Motor neuron (in vitro differentiated cells): ENCODE measurements at regions of chr4 and their contacts with region 1.

Region 1: DNA sequence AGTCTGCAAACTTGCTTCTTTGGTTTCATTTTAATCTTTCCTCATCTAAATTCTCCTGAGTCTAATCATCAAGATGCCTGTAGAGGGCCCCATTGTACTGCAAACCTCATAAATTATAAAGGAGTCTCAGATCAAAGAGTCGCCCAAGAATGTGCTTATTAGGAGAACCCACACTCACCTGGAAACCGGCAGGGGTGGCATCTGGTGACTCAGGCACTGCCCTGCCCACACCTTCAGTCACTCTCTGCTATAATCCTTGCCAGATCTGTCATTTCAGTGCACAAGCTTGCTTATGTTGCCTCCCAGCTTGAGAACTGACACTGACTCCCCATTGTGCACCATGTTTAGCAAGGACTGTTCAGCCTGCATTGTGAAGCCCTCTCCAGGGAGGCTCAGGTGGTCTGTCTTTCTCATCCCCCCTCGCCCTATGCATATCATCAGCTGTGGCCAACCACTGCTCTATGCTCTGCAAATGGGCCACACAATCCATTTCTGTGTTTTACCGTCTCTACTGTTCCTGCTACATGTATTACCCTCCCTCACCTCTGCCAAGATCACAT is 12.4 kb downstream of the EPGN start:
- ATAC-seq: peak in 5 of 8 experiments; percentile 53 to 87 (median 59)
- H3K4me3 ChIP-seq: no peak overlapping the region
- H3K27ac ChIP-seq: no peak overlapping the region
- H3K4me1 ChIP-seq: no peaks in the 10 kb centered on the region

Region 2: GRCh38 chr4:74189331-74190043 is 131.2 kb before region 1 on chr4:
- in situ Hi-C with region 1: loop called in 1 of 9 experiments (anchors 25 kb)
- ATAC-seq: peak in 7 of 8 experiments; percentile 31 to 62 (median 57)
- H3K4me3 ChIP-seq: no peak overlapping the region
- H3K27ac ChIP-seq: no peak overlapping the region
- H3K4me1 ChIP-seq: no peaks in the 10 kb centered on the region